CD4-positive, alpha-beta memory T cell (primary cell): ENCODE measurements at regions of chr20 and their contacts with region 1.

Region 1: DNA sequence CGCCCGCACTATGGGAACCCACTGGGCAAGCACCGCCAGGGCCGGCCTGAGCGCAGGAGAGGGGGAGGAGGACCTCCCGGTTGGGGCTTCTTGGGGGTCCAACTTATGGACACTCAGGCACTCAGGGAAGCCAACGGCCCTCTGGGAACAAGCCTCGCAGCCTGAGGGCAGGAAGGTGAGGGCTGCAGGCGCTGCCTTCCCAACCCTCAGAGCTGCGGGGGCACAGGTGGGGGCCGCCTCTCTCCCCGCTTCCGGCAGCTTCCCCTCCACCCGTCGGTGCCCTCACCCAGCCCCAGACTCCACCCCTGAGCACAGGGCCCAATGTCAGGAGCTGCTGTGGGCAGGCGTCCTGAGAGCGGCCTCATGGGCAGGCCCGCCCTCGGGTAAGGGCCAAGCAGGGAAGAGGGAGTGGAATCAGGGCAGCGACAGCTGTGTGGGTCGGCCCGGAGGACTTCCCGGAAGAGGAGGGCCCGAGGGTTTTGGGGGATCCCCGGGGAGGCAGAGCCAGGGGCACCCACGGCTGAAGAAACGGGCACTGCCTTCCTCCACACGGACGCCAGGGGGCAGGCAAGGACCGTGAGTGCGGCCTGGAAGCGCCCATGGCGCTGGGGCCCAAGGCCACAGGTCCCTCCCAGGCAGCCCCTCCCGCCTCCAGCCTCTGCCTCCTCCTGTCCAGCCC is 488 bp upstream of the PTK6 start:
- DNase-seq: peak; percentile 92 to 95 (median 93)
- H3K4me3 ChIP-seq: peak overlapping the region in 1 of 2 donors; percentile 56
- H3K4me3 Mint-ChIP-seq: peak overlapping the region; percentile 65 to 85 (median 80)
- H3K27ac ChIP-seq: peak overlapping the region; percentile 68
- H3K27ac Mint-ChIP-seq: peak overlapping the region; percentile 35 to 89 (median 81)
- H3K4me1 ChIP-seq: peaks cover 28% of the 10 kb centered on the region
- H3K4me1 Mint-ChIP-seq: peaks cover 0 to 17% (median 2%) of the 10 kb centered on the region in 4 donors
- H3K27me3 ChIP-seq: no peaks in the 10 kb centered on the region
- H3K27me3 Mint-ChIP-seq: no peaks in the 10 kb centered on the region

Region 2: DNA sequence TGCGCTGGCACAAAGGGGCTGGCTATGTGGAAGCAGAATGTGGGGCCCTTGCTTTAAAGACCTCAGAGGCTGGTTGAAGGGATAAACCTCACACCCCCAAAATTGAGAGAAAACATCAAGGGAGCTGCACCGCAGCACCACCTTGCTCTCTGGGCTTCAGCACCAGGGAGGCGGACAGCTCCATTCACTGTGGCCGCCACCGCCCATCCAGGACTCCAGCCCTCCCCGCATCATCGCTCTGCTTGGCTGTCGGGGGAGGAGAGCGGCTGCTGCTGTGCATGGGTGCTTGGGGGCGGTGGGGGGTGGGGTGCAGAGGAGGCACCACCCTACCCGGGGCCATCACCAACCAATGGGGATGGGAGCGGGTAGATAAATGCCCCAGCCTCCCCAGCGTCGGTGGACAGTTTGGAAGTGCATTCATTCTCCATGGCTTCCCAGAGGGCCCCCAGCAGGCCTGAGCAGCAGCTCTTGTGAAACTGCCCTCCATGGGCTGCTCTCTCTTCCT is 455.3 kb before region 1 on chr20:
- CTCF ChIA-PET with region 1: no interaction called
- POLR2A ChIA-PET with region 1: no interaction called
- intact Hi-C with region 1: no loop called
- DNase-seq: peak in 2 of 5 donors; percentile 24 to 27
- H3K4me3 ChIP-seq: no peak overlapping the region
- H3K4me3 Mint-ChIP-seq: no peak overlapping the region
- H3K27ac ChIP-seq: no peak overlapping the region
- H3K27ac Mint-ChIP-seq: no peak overlapping the region
- H3K4me1 ChIP-seq: no peaks in the 10 kb centered on the region
- H3K4me1 Mint-ChIP-seq: no peaks in the 10 kb centered on the region
- H3K27me3 ChIP-seq: no peaks in the 10 kb centered on the region
- H3K27me3 Mint-ChIP-seq: peaks cover 20 to 24% of the 10 kb centered on the region in 2 donors

Region 3: DNA sequence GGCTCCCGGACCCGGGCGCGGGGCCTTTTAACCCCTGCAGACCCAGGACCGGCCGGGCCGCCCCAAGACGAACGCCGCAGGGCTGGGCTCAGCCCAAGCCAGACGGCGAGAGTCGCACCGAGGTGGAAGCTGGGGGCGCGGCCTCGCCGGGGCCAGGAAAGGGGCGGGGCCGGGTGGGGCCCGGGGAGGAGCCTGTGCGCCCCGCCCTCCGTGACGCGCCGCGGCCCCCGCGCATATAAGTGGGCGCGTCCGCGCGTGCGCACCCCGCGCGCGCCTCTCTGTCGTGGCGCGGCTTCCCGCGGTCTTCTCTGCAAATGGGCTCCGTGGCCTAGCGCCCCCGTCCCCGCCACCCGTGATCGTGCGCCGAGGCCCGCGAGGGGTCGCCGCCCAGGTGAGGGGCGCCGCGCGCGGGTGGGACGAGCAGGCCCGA is 17.1 kb before region 1 on chr20 and contains the start of gene PPDPF:
- CTCF ChIA-PET with region 1: interaction called, 8 read pairs
- POLR2A ChIA-PET with region 1: interaction called, 84 read pairs
- intact Hi-C with region 1: loop called (anchors 1 kb)
- DNase-seq: peak; percentile 80 to 89 (median 83)
- H3K4me3 ChIP-seq: peak within 1 kb of the TSS; percentile 77 to 84
- H3K4me3 Mint-ChIP-seq: peak within 1 kb of the TSS; percentile 80 to 84 (median 82)
- H3K27ac ChIP-seq: peak within 1 kb of the TSS; percentile 74
- H3K27ac Mint-ChIP-seq: peak within 1 kb of the TSS; percentile 57 to 82 (median 74)
- H3K4me1 ChIP-seq: peaks cover 23% of the 10 kb centered on the region
- H3K4me1 Mint-ChIP-seq: peaks cover 6 to 28% (median 11%) of the 10 kb centered on the region in 4 donors
- H3K27me3 ChIP-seq: no peaks in the 10 kb centered on the region
- H3K27me3 Mint-ChIP-seq: no peaks in the 10 kb centered on the region
- total RNA-seq, gene PPDPF: 208 to 229 TPM

Region 4: DNA sequence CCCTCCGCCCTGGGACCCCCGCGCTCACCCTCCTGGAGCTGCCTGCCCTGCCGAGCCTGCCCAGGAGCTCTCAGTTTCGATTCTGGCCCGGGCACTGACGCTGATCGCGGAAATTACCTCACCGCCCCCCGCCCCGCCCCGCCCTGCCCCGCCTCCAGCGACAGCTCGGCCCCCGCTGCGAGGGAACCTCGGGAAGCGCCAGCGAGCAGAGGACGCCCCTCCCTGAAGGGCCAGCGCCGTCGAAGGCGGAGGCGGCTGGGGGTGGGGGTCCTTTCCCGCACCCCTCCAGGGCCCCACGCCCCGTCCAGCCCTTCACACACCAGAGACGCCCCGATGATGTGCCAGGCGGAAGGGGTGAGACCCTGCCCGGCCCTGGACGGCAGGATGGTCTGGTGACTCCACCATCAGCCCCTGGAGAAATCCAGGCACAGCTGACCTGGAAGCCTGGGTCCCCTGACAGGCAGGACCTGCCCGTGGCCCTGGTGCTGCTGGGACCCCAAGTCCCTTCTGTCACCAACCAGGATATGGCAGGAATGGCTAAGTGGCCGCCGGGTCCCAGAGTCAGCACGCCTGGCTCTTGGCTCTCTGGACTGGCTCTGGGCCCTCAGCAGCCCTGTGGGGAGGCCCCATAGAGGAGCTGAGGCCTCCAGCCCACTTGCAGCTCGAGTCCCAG is 36.6 kb after region 1 on chr20 and contains the start of gene HELZ2:
- CTCF ChIA-PET with region 1: interaction called, 10 read pairs
- POLR2A ChIA-PET with region 1: interaction called, 5 read pairs
- intact Hi-C with region 1: loop called (anchors 1 kb)
- DNase-seq: peak; percentile 61 to 74 (median 64)
- H3K4me3 ChIP-seq: peak within 1 kb of the TSS; percentile 65 to 84
- H3K4me3 Mint-ChIP-seq: peak within 1 kb of the TSS; percentile 75 to 88 (median 82)
- H3K27ac ChIP-seq: peak within 1 kb of the TSS; percentile 70
- H3K27ac Mint-ChIP-seq: peak within 1 kb of the TSS in 6 of 7 donors; percentile 48 to 83 (median 77)
- H3K4me1 ChIP-seq: peaks cover 24% of the 10 kb centered on the region
- H3K4me1 Mint-ChIP-seq: peaks cover under 1 to 6% (median 4%) of the 10 kb centered on the region in 4 donors
- H3K27me3 ChIP-seq: no peaks in the 10 kb centered on the region
- H3K27me3 Mint-ChIP-seq: no peaks in the 10 kb centered on the region
- total RNA-seq, gene HELZ2: 39.6 to 45.4 TPM

Region 5: DNA sequence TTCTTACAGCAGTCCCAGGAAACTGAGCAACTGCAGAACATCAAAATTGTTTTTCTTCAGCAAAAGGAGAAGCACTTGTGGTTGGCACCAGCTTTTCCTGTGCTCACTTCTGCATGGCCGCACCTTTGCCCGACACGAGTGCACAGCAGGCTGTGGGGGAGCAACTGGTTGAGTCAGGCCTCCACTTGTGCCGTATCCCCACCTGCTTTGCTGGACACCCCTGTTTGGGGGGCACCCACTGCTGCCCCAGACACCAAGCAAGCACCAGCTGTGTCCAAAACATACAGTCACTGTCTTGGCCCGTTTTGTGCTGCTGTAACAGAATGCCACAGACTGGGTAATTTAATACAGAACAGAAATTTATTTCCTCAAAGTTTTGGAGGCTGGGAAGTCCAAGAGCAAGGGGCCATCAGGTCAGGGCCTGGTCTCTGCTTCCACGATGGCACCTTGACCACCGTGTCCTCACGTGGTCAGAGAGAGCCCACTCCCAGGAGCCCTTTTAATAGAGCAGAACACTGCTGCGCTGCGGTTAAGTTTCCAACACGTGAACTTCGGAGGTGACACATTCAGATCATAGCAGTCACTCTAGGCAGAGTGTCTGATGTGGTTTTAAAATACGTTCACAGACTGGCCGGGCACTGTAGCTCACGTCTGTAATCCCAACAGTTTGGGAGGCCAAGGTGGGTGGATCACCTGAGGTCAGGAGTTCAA is 97.9 kb after region 1 on chr20:
- CTCF ChIA-PET with region 1: interaction called, 5 read pairs
- POLR2A ChIA-PET with region 1: interaction called, 19 read pairs
- intact Hi-C with region 1: no loop called
- DNase-seq: peak; percentile 87 to 95 (median 89)
- H3K4me3 ChIP-seq: peak overlapping the region in 1 of 2 donors; percentile 39
- H3K4me3 Mint-ChIP-seq: peak overlapping the region; percentile 80 to 93 (median 84)
- H3K27ac ChIP-seq: peak overlapping the region; percentile 72
- H3K27ac Mint-ChIP-seq: peak overlapping the region; percentile 98 to 100 (median 99)
- H3K4me1 ChIP-seq: peaks cover 79% of the 10 kb centered on the region
- H3K4me1 Mint-ChIP-seq: peaks cover 32 to 79% (median 55%) of the 10 kb centered on the region in 4 donors
- H3K27me3 ChIP-seq: no peaks in the 10 kb centered on the region
- H3K27me3 Mint-ChIP-seq: peaks cover 0 to 2% of the 10 kb centered on the region in 2 donors

Region 6: GRCh38 chr20:63707549-63708300 is 170.1 kb after region 1 on chr20 and contains the starts of genes ARFRP1 and ZGPAT:
- CTCF ChIA-PET with region 1: interaction called, 7 read pairs
- POLR2A ChIA-PET with region 1: interaction called, 14 read pairs
- intact Hi-C with region 1: loop called (anchors 2 kb)
- DNase-seq: peak; percentile 85 to 91 (median 86)
- H3K4me3 ChIP-seq: peak within 1 kb of the TSS; percentile 57 to 87
- H3K4me3 Mint-ChIP-seq: peak within 1 kb of the TSS; percentile 86 to 95 (median 90)
- H3K27ac ChIP-seq: peak within 1 kb of the TSS; percentile 65
- H3K27ac Mint-ChIP-seq: peak within 1 kb of the TSS; percentile 86 to 95 (median 90)
- H3K4me1 ChIP-seq: peaks cover 52% of the 10 kb centered on the region
- H3K4me1 Mint-ChIP-seq: peaks cover 24 to 61% (median 38%) of the 10 kb centered on the region in 4 donors
- H3K27me3 ChIP-seq: no peaks in the 10 kb centered on the region
- H3K27me3 Mint-ChIP-seq: no peaks in the 10 kb centered on the region
- total RNA-seq, gene ARFRP1: 85.6 to 92.0 TPM
- total RNA-seq, gene ZGPAT: 51.8 to 55.3 TPM

Region 7: DNA sequence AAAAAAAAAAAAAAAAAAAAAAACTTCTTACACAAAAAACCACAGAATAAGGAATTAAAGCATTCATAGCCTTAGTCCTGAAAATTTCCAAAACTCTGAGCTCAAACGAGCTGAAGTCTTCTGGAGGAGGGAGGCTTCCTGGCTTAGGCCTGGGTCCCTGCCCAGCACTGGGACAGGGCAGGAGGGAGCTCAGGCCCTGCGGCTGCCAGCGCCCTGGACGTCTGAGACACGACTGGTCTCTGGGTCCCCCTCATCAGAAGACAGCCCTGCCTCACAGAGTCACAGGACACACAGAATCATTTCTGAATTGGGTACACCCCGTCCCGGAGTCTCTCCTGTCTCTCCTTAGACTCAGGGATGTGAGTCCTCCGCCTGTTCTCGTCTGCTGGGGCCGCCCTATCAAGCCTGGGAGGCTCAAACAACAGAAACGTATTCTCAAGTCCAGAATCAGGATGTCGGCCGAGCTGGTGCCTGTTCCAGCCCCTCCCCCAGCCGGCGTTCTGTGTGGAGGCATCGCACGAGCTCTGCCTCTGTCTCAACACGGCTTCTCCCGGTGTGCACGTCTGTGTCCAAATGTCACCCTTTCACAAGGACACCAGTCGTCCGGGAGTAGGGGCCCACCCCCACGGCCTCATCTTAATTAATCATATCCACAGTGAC is 254.0 kb after region 1 on chr20:
- CTCF ChIA-PET with region 1: interaction called, 15 read pairs
- POLR2A ChIA-PET with region 1: interaction called, 5 read pairs
- intact Hi-C with region 1: loop called (anchors 2 kb)
- DNase-seq: no peak
- H3K4me3 ChIP-seq: no peak overlapping the region
- H3K4me3 Mint-ChIP-seq: no peak overlapping the region
- H3K27ac ChIP-seq: no peak overlapping the region
- H3K27ac Mint-ChIP-seq: no peak overlapping the region
- H3K4me1 ChIP-seq: no peaks in the 10 kb centered on the region
- H3K4me1 Mint-ChIP-seq: peaks cover 0 to 1% (median under 1%) of the 10 kb centered on the region in 4 donors
- H3K27me3 ChIP-seq: no peaks in the 10 kb centered on the region
- H3K27me3 Mint-ChIP-seq: peaks cover 7% of the 10 kb centered on the region in 2 donors